ENCODE measurements at regions of chr7 and their contacts with region 1.

Region 1: DNA sequence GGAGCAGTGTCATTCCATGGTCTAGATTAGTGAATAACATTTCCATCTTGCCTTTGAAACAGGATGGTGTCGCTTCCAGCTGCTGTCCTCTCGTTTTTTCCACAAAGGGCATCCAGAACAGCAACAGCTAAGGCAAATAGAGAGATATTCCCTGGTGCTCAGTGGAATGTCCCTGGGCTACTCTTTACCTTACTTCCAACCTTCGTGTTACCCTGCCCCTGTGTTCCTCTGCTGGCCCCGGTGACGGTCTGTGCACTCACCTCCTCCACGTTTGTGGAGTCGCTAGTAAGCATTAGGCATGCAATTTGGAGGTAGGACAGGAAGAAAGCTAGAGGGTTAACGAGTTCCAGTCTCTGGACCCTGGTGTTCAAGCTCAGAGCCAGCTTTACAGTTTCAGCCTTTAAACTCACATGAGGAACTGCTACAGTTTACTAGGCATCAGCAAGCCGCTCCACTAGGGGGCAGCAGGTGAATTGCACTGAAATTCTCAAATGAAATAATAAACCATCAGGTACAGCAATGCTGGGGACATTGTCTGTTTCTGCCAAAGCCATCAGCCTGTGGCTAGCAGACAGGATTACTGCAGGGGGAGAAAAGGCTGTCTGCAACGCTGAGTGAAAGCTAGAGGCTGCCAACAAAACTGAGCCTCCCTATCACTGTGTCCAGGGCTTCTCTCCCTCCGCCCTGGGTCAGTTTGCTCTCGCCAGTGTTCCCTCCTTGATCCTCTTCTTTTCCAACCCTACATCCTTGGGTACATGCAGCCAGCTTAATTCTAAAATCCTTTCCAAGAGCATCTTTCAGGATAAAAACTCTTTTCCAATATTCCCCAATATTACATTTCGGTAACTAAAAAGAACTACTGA is 9.0 kb downstream of the MRPL32 start:
- DNase-seq: peak; percentile 48
- ATAC-seq: peak; percentile 66
- H3K4me3 ChIP-seq: no peak overlapping the region
- H3K27ac ChIP-seq: no peak overlapping the region
- H3K4me1 ChIP-seq: peaks cover 12% of the 10 kb centered on the region; the same call in 1 of the 2 replicates
- H3K27me3 ChIP-seq: no peaks in the 10 kb centered on the region
- CTCF ChIP-seq: peak; percentile 87 to 92 (median 91)
- EP300 ChIP-seq: no peak
- POLR2A ChIP-seq: no peak
- RAD21 ChIP-seq: peak; percentile 97

Region 2: GRCh38 chr7:42567051-42567450 is 374.2 kb before region 1 on chr7:
- CTCF ChIA-PET with region 1: no interaction called
- POLR2A ChIA-PET with region 1: no interaction called
- RAD21 ChIA-PET with region 1: no interaction called
- SMC1A ChIA-PET with region 1: no interaction called
- in situ Hi-C with region 1: no loop called
- intact Hi-C with region 1: no loop called
- DNase-seq: no peak
- ATAC-seq: no peak
- H3K4me3 ChIP-seq: no peak overlapping the region
- H3K27ac ChIP-seq: no peak overlapping the region
- H3K4me1 ChIP-seq: no peaks in the 10 kb centered on the region
- H3K27me3 ChIP-seq: no peaks in the 10 kb centered on the region
- CTCF ChIP-seq: no peak
- EP300 ChIP-seq: no peak
- POLR2A ChIP-seq: no peak
- RAD21 ChIP-seq: no peak

Region 3: DNA sequence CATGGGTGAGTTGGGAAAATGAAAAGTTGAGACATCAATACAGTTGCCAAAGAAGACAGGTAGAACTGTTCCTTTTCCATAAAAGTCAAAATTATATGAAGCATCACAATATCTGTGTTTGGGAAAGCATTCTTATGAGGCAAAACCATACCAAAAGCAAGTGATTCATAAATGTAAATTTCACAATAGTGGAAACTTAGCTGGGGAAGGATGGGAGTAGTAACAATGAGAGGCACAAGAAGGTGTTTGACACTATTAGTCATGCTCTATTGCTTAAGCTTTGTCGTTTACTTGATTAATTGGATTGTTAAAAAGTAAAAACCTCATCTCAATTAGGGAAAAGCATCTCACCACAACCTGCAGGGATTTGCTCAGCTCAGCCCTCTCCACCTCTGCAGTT is 269.6 kb before region 1 on chr7:
- CTCF ChIA-PET with region 1: no interaction called
- POLR2A ChIA-PET with region 1: no interaction called
- RAD21 ChIA-PET with region 1: no interaction called
- SMC1A ChIA-PET with region 1: no interaction called
- in situ Hi-C with region 1: no loop called
- intact Hi-C with region 1: no loop called
- DNase-seq: no peak
- ATAC-seq: no peak
- H3K4me3 ChIP-seq: no peak overlapping the region
- H3K27ac ChIP-seq: no peak overlapping the region
- H3K4me1 ChIP-seq: no peaks in the 10 kb centered on the region
- H3K27me3 ChIP-seq: no peaks in the 10 kb centered on the region
- CTCF ChIP-seq: no peak
- EP300 ChIP-seq: no peak
- POLR2A ChIP-seq: no peak
- RAD21 ChIP-seq: no peak

Region 4: GRCh38 chr7:42960762-42961161 is 19.5 kb after region 1 on chr7:
- CTCF ChIA-PET with region 1: interaction called, 22 read pairs
- POLR2A ChIA-PET with region 1: interaction called, 11 read pairs
- RAD21 ChIA-PET with region 1: interaction called, 17 read pairs
- SMC1A ChIA-PET with region 1: interaction called, 9 read pairs
- in situ Hi-C with region 1: no loop called
- intact Hi-C with region 1: no loop called
- DNase-seq: no peak
- ATAC-seq: peak; percentile 90
- H3K4me3 ChIP-seq: no peak overlapping the region
- H3K27ac ChIP-seq: no peak overlapping the region
- H3K4me1 ChIP-seq: no peaks in the 10 kb centered on the region
- H3K27me3 ChIP-seq: no peaks in the 10 kb centered on the region
- CTCF ChIP-seq: no peak
- EP300 ChIP-seq: no peak
- POLR2A ChIP-seq: no peak
- RAD21 ChIP-seq: no peak

Region 5: DNA sequence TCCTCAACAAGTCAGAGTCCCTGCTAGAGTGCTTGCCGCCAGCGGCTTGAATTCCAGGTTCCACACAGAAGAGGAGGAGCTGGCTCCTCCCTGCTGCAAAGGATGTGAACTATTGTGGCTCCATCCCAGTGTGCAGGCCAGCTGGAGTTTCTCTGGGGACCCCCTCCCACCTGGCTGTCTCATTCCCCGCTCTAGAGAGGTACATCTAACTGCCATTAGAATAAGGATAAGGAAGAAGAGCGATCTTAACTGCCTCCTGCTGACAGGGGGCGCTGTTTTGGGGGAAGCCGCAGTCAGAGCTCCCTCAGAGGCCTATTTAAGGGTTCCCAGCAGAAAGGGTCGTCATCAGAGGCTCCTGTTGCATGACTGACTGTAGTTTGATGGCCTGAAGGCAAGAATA is 130.4 kb after region 1 on chr7:
- CTCF ChIA-PET with region 1: interaction called, 7 read pairs
- POLR2A ChIA-PET with region 1: interaction called, 3 read pairs
- RAD21 ChIA-PET with region 1: interaction called, 7 read pairs
- SMC1A ChIA-PET with region 1: interaction called, 16 read pairs
- in situ Hi-C with region 1: no loop called
- intact Hi-C with region 1: loop called (anchors 5 kb)
- DNase-seq: no peak
- ATAC-seq: peak; percentile 48
- H3K4me3 ChIP-seq: no peak overlapping the region
- H3K27ac ChIP-seq: no peak overlapping the region
- H3K4me1 ChIP-seq: peaks cover 13% of the 10 kb centered on the region
- H3K27me3 ChIP-seq: no peaks in the 10 kb centered on the region
- CTCF ChIP-seq: peak; percentile 16 to 43 (median 34); a peak in 3 of 6 replicates
- EP300 ChIP-seq: no peak
- POLR2A ChIP-seq: no peak
- RAD21 ChIP-seq: peak; percentile 23; the same call in 1 of the 2 replicates

Region 6: GRCh38 chr7:43164757-43165156 is 223.5 kb after region 1 on chr7:
- CTCF ChIA-PET with region 1: no interaction called
- POLR2A ChIA-PET with region 1: no interaction called
- RAD21 ChIA-PET with region 1: interaction called, 3 read pairs
- SMC1A ChIA-PET with region 1: interaction called, 4 read pairs
- in situ Hi-C with region 1: no loop called
- intact Hi-C with region 1: loop called (anchors 5 kb)
- DNase-seq: peak; percentile 61
- ATAC-seq: peak; percentile 99
- H3K4me3 ChIP-seq: no peak overlapping the region
- H3K27ac ChIP-seq: peak overlapping the region; percentile 49
- H3K4me1 ChIP-seq: peaks cover 7% of the 10 kb centered on the region
- H3K27me3 ChIP-seq: no peaks in the 10 kb centered on the region
- CTCF ChIP-seq: no peak
- EP300 ChIP-seq: peak in 1 of 2 experiments; percentile 68; a peak in 1 of 4 replicates
- POLR2A ChIP-seq: no peak
- RAD21 ChIP-seq: no peak

Region 7: DNA sequence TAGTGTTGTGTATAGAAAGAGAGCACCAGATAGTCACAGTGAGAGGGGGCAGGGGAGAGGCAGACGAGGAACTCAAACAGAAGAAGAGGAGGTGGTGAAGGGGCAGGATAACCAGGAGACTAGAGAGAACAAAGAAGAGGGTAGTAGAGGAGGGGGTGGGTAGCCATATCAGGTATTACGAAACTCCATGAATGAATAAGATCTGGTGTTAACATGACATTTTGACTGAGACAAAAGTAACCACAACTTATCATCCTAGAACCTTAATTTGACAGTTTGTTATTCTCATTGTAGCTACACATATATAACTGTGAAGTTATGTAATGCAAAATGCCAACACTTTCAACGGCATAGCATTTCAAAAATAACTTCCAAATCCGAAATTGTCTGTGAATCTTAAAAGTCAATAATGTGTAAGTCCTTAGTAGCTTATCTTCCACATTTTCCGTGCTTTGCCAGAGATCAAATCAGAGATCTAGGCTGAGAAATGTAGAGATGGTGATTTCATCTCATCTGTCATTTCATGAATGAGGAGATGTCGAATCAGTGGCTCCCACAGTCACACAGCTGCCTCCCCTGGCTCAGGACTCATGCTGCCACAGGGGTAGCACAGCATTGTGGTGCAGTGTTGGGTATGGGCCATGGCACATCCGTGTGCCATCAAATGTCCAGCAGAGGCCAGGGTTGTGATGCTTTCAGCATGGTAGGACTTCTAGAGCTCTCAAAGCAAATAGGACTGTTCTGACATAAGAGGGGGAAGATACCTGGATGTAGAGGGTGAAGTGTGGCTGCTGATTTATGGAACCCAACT is 373.4 kb after region 1 on chr7:
- CTCF ChIA-PET with region 1: interaction called, 6 read pairs
- POLR2A ChIA-PET with region 1: no interaction called
- RAD21 ChIA-PET with region 1: interaction called, 8 read pairs
- SMC1A ChIA-PET with region 1: interaction called, 14 read pairs
- in situ Hi-C with region 1: no loop called
- intact Hi-C with region 1: loop called (anchors 5 kb)
- DNase-seq: no peak
- ATAC-seq: peak; percentile 85
- H3K4me3 ChIP-seq: no peak overlapping the region
- H3K27ac ChIP-seq: no peak overlapping the region; the same call in 1 of the 2 replicates
- H3K4me1 ChIP-seq: peaks cover 17% of the 10 kb centered on the region
- H3K27me3 ChIP-seq: no peaks in the 10 kb centered on the region
- CTCF ChIP-seq: peak in 2 of 3 experiments; percentile 11 to 36; a peak in 3 of 6 replicates
- EP300 ChIP-seq: peak; percentile 92 to 96; a peak in 3 of 4 replicates
- POLR2A ChIP-seq: no peak
- RAD21 ChIP-seq: peak; percentile 18; the same call in 1 of the 2 replicates

Region 8: DNA sequence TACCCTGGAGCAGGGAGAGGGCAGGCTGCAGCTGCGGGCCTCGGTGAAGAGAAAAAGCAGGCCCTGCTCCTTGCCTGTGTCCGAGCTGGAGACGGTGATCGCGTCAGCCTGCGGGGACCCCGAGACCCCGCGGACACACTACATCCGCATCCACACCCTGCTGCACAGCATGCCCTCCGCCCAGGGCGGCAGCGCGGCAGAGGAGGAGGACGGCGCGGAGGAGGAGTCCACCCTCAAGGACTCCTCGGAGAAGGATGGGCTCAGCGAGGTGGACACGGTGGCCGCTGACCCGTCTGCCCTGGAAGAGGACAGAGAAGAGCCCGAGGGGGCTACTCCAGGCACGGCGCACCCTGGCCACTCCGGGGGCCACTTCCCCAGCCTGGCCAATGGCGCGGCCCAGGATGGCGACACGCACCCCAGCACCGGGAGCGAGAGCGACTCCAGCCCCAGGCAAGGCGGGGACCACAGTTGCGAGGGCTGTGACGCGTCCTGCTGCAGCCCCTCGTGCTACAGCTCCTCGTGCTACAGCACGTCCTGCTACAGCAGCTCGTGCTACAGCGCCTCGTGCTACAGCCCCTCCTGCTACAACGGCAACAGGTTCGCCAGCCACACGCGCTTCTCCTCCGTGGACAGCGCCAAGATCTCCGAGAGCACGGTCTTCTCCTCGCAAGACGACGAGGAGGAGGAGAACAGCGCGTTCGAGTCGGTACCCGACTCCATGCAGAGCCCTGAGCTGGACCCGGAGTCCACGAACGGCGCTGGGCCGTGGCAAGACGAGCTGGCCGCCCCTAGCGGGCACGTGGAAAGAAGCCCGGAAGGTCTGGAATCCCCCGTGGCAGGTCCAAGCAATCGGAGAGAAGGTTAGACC is 503.7 kb after region 1 on chr7:
- CTCF ChIA-PET with region 1: interaction called, 54 read pairs
- POLR2A ChIA-PET with region 1: no interaction called
- RAD21 ChIA-PET with region 1: interaction called, 20 read pairs
- SMC1A ChIA-PET with region 1: interaction called, 14 read pairs
- in situ Hi-C with region 1: loop called (anchors 5 kb)
- intact Hi-C with region 1: no loop called
- DNase-seq: no peak
- ATAC-seq: no peak
- H3K4me3 ChIP-seq: no peak overlapping the region
- H3K27ac ChIP-seq: no peak overlapping the region
- H3K4me1 ChIP-seq: no peaks in the 10 kb centered on the region
- H3K27me3 ChIP-seq: no peaks in the 10 kb centered on the region; a peak in 1 of 4 replicates
- CTCF ChIP-seq: no peak
- EP300 ChIP-seq: no peak
- POLR2A ChIP-seq: no peak
- RAD21 ChIP-seq: no peak